Head of caudate nucleus (tissue), 42 donors: ENCODE measurements at regions of chr19 and their contacts with region 1.

Region 1: GRCh38 chr19:44723952-44724319 is 24.6 kb upstream of the BCL3 start:
- DNase-seq: peak; percentile 55 to 88 (median 75)

Region 2: GRCh38 chr19:44653977-44654774 is 69.8 kb before region 1 on chr19:
- intact Hi-C with region 1: no loop called
- DNase-seq: peak; percentile 13 to 76 (median 49)

Region 3: GRCh38 chr19:44689056-44689895 is 34.7 kb before region 1 on chr19:
- intact Hi-C with region 1: no loop called
- DNase-seq: peak; percentile 25 to 86 (median 68)

Region 4: GRCh38 chr19:44770550-44771257 is 46.8 kb after region 1 on chr19:
- intact Hi-C with region 1: loop called (anchors 2 kb)
- DNase-seq: peak; percentile 64 to 90 (median 79)

Region 5: DNA sequence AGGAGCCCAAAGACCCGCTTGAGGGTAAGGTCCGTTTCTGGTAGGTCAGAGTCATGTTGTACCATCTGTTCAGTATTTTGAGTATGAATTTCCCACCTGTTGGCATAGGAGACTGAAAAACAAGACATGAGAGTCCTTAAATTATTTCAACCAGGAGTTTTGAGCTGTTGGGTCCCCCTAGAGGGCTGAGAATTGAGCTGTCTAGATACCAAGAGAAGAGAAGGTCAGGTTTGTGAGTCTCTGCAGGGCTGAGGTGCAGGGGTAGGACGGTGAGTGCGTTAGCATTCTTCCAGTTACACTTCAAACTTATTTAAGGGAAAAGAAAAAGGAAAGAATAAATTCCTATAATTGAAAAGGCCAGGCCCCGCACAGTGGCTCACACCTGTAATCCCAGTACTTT is 58.8 kb after region 1 on chr19:
- intact Hi-C with region 1: no loop called
- DNase-seq: no peak